ENCODE measurements at regions of chr2 and their contacts with region 1.

Region 1: GRCh38 chr2:108933691-108934117 is 55.3 kb downstream of the EDAR start:
- DNase-seq: no peak
- ATAC-seq: no peak
- H3K4me3 Mint-ChIP-seq: no peak overlapping the region
- H3K27ac Mint-ChIP-seq: no peak overlapping the region
- H3K4me1 Mint-ChIP-seq: peaks cover 25% of the 10 kb centered on the region
- H3K27me3 Mint-ChIP-seq: no peaks in the 10 kb centered on the region

Region 2: DNA sequence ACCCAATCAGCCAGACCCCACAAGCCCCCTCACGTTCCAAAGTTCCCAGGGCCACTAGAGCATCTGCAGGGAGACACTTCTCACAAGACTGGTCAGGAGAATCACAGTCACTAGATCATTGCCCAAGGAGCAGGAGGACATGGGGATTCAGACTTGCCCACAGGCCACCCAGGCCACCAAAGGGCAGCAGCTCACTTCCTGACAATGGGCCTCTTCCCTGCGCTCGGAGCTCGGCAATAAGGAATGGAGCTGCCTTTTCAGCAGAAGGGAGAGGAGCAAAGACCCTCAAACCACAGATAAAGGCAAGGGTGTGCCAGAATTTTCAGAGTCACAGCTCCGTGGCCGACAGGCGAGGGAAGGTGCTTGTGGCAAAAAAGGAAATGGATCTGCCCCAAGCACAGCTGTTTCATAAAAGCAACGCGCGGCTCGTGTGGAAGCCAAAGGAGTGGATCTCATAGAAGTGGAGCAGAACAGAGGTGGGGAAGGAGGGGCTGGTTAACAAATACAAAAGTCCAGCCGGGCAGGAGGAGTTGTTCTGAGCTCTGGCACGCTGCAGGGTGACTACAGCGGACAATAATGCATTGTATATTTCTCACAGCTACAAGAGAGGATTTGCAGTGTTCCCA is 16.8 kb before region 1 on chr2:
- CTCF ChIA-PET with region 1: interaction called, 10 read pairs
- POLR2A ChIA-PET with region 1: no interaction called
- intact Hi-C with region 1: loop called in 1 of 2 experiments (anchors 2 kb)
- DNase-seq: no peak
- ATAC-seq: no peak
- H3K4me3 Mint-ChIP-seq: no peak overlapping the region
- H3K27ac Mint-ChIP-seq: no peak overlapping the region
- H3K4me1 Mint-ChIP-seq: peaks cover 3% of the 10 kb centered on the region
- H3K27me3 Mint-ChIP-seq: no peaks in the 10 kb centered on the region

Region 3: DNA sequence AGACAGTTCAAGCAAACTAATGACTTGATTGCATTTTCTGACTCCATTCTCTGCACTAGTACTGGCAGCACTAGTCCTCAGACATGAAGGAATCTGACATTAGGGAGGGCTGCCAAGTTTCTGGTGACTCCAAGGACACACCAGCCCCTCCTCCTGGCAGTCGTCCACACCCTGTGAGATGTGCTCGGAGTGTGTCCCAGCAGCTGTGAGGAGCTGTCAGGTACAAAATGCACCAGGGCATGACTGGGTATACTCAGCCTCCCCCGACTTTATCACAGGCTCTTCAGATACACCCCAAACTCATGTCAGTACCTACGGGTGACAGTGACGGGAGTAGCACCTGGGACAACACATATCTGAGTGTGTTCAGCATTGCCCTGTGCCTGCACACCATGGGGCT is 12.3 kb after region 1 on chr2:
- CTCF ChIA-PET with region 1: interaction called, 9 read pairs
- POLR2A ChIA-PET with region 1: no interaction called
- intact Hi-C with region 1: loop called in 1 of 2 experiments (anchors 1 kb)
- DNase-seq: no peak
- ATAC-seq: peak; percentile 33
- H3K4me3 Mint-ChIP-seq: no peak overlapping the region
- H3K27ac Mint-ChIP-seq: no peak overlapping the region
- H3K4me1 Mint-ChIP-seq: peaks cover 6% of the 10 kb centered on the region
- H3K27me3 Mint-ChIP-seq: no peaks in the 10 kb centered on the region

Region 4: GRCh38 chr2:108960006-108960405 is 26.3 kb after region 1 on chr2:
- CTCF ChIA-PET with region 1: interaction called, 4 read pairs
- POLR2A ChIA-PET with region 1: no interaction called
- intact Hi-C with region 1: loop called (anchors 2 kb)
- DNase-seq: peak; percentile 42
- ATAC-seq: peak; percentile 27
- H3K4me3 Mint-ChIP-seq: no peak overlapping the region
- H3K27ac Mint-ChIP-seq: peak overlapping the region; percentile 38
- H3K4me1 Mint-ChIP-seq: peaks cover 81% of the 10 kb centered on the region
- H3K27me3 Mint-ChIP-seq: no peaks in the 10 kb centered on the region

Region 5: GRCh38 chr2:108965540-108966236 is 32.0 kb after region 1 on chr2:
- CTCF ChIA-PET with region 1: interaction called, 26 read pairs
- POLR2A ChIA-PET with region 1: no interaction called
- intact Hi-C with region 1: loop called in 1 of 2 experiments (anchors 2 kb)
- DNase-seq: peak; percentile 63
- ATAC-seq: peak; percentile 69
- H3K4me3 Mint-ChIP-seq: peak overlapping the region; percentile 56
- H3K27ac Mint-ChIP-seq: peak overlapping the region; percentile 32
- H3K4me1 Mint-ChIP-seq: peaks cover 94% of the 10 kb centered on the region
- H3K27me3 Mint-ChIP-seq: no peaks in the 10 kb centered on the region